HAP-1 (cell line): ENCODE measurements at regions of chr7 and their contacts with region 1.

Region 1: DNA sequence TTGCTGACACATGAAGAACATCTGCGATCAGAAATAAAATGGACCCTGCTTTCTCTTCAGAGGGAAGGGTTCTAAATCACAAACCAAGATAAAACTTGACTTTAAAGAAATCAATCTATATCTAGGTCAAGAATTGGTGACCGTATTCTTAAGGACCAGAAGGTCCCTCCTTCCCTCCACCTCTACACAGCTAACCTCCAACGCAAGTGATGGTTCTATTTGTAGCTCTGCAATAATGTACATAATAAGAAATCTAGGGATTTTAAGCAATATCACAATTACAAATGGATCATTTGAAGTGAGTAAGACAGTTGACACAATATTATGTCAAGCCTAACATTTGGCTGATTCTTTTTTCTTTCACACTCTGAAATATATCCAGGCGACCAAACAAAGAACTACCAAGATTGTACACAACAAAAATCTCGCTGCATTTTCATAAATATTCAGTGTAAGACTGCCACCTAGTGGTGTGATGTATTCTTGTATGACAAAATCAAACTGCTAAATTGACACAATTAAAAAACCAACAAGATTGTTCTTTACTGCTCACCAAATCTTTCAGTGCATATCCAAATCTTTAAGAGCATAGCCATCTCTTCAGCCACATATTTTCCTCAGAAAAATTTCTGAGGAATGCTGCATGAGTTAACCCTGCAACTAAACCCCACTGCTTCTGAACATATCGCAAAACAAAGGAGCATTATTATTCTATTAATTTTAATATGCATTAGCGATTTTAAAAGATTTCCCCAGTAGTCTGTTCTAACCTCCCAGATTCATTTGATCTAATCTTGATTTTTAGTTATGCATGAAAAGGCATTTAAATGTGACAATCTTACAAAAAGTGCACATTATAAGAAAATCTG is 44.5 kb downstream of the ICA1 start:
- DNase-seq: peak; percentile 48 to 67
- H3K4me3 ChIP-seq: no peak overlapping the region
- H3K4me1 ChIP-seq: no peaks in the 10 kb centered on the region
- H3K27me3 ChIP-seq: no peaks in the 10 kb centered on the region

Region 2: DNA sequence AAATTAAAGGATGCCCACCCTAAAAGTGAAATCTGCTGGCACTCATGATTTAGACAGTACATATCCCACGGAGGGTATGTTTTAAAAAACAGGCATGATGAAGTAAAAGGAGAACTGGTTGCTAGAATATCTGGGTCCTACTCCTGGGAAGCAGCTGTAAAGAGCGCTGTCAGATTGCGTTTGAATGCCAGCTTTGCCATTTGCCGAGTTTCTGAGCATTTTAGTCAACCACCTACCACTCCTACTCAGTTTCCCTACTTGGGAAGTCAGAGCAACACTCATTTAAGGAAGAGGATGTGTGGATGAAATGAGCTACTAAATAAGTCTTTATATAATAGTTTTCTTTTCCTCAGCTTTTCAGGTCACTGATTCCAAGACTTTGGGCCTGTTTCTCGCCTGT is 578.0 kb before region 1 on chr7:
- in situ Hi-C with region 1: no loop called
- DNase-seq: no peak
- H3K4me3 ChIP-seq: peak overlapping the region; percentile 74
- H3K4me1 ChIP-seq: peaks cover 16% of the 10 kb centered on the region
- H3K27me3 ChIP-seq: no peaks in the 10 kb centered on the region

Region 3: GRCh38 chr7:7653593-7654187 is 563.7 kb before region 1 on chr7:
- in situ Hi-C with region 1: loop called (anchors 25 kb)
- DNase-seq: peak in 1 of 2 experiments; percentile 73
- H3K4me3 ChIP-seq: no peak overlapping the region
- H3K4me1 ChIP-seq: no peaks in the 10 kb centered on the region
- H3K27me3 ChIP-seq: no peaks in the 10 kb centered on the region